Right cardiac atrium (tissue), 5 donors: ENCODE measurements at regions of chr16 and their contacts with region 1.

Region 1: DNA sequence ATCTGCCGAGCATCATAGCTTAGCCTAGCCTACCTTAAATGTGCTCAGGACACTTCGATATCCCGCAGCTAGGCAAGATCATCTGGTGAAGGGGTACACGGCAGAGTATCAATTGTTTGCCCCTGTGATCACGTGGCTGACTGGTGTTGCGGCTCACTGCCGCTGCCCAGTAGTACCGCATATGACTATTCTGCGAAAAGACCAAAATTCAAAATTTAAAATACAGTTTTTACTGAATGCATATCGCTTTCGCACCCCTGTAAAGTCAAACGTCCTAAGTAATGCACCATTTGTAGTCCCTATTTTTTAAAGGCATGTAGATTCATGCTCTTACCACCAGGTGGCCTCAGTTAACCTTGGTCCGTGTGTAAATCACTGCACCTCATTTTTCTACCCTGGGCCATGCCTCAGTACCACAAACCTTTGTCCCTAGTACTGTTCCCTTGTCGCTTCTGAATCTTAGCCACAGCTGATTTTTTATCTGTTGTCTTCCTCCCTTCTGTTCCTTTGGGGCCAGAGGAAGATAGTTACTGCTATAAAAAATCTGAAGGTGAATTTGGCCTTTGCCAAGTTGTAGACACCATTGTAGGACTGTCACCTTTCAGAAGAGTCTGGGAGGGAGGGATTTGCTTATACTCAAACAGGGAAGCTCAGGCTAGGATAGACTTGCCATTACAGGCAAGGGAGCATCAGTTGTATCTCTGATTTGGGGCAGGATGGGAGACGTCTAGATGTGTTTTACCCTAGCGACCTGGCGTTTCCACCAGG is 34.4 kb downstream of the WWP2 start:
- DNase-seq: no peak
- ATAC-seq: peak; percentile 82 to 83
- H3K4me3 ChIP-seq: no peak overlapping the region
- H3K27ac ChIP-seq: no peak overlapping the region
- H3K4me1 ChIP-seq: no peaks in the 10 kb centered on the region
- H3K27me3 ChIP-seq: no peaks in the 10 kb centered on the region

Region 2: GRCh38 chr16:69632836-69633235 is 163.7 kb before region 1 on chr16:
- intact Hi-C with region 1: no loop called
- DNase-seq: no peak
- ATAC-seq: no peak
- H3K4me3 ChIP-seq: no peak overlapping the region
- H3K27ac ChIP-seq: no peak overlapping the region
- H3K4me1 ChIP-seq: no peaks in the 10 kb centered on the region
- H3K27me3 ChIP-seq: no peaks in the 10 kb centered on the region

Region 3: GRCh38 chr16:69712914-69713581 is 83.5 kb before region 1 on chr16:
- intact Hi-C with region 1: no loop called
- DNase-seq: no peak
- ATAC-seq: no peak
- H3K4me3 ChIP-seq: no peak overlapping the region
- H3K27ac ChIP-seq: no peak overlapping the region
- H3K4me1 ChIP-seq: no peaks in the 10 kb centered on the region
- H3K27me3 ChIP-seq: no peaks in the 10 kb centered on the region

Region 4: GRCh38 chr16:69859105-69859989 is 62.8 kb after region 1 on chr16:
- intact Hi-C with region 1: loop called in 2 of 4 experiments (anchors 5 to 10 kb)
- DNase-seq: peak in 1 of 3 donors; percentile 33
- ATAC-seq: peak; percentile 58 to 74
- H3K4me3 ChIP-seq: no peak overlapping the region
- H3K27ac ChIP-seq: peak overlapping the region; percentile 85
- H3K4me1 ChIP-seq: peaks cover 12% of the 10 kb centered on the region
- H3K27me3 ChIP-seq: no peaks in the 10 kb centered on the region

Region 5: DNA sequence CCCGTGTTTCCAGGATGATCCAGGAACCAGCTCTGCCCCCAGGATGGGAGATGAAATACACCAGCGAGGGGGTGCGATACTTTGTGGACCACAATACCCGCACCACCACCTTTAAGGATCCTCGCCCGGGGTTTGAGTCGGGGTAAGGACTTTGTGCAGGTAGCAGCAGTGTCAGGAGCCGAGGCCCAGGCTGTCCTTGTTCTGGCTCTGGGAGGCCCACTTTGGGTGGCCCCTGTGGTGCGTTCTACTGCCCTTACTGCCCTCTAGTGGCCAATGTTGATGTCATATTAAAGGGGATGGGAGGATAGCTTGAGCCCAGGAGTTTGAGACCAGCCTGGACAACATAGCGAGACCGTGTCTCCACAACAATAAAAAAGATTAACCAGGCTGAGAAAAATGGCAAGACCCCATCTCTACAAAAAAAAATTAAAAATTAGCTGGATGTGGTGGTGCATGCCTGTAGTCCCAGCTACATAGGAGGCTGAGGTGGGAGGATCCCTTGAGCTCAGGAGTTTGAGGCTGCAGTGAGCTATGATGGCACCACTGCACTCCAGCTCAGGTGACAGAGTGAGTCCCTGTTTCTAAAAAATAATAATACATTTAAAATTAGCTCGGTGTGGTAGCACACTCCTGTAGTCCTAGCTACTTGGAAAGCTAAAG is 133.7 kb after region 1 on chr16:
- intact Hi-C with region 1: loop called (anchors 2 to 5 kb)
- DNase-seq: peak; percentile 51 to 78 (median 76)
- ATAC-seq: peak; percentile 66 to 76
- H3K4me3 ChIP-seq: no peak overlapping the region
- H3K27ac ChIP-seq: no peak overlapping the region
- H3K4me1 ChIP-seq: peaks cover 6% of the 10 kb centered on the region
- H3K27me3 ChIP-seq: no peaks in the 10 kb centered on the region

Region 6: DNA sequence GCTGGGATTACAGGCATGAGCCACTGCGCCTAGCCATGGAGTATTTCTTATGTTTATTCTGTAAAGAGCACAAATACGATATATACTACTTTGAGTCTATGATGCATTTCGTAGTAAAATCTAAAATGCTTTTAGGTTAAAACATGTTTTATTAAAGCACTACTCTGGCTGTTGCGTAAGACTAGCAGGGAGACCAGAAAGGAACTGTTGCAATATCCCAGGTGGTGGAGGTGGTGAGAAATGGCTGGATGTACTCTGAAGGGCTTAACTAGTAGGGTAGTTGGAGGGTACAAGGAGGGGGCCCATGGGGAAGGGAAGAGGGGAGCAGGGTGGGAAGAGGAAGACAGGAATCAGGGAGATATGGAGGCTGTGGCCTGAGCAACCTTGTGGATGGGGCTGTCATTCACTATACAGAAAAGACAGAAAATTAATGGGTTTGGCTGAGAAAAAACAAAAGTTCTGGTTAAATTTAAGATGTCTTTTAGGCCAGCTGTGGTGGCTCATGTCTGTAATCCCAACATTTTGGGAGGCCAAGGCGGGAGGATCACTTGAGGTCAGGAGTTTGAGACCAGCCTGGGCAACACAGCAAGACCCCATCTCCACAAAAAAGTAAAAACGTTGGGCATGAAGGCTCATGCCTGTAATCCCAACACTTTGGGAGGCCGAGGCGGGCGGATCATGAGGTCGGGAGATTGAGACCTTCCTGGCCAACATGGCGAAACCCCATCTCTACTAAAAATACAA is 606.6 kb after region 1 on chr16:
- intact Hi-C with region 1: no loop called
- DNase-seq: no peak
- ATAC-seq: no peak
- H3K4me3 ChIP-seq: no peak overlapping the region
- H3K27ac ChIP-seq: no peak overlapping the region
- H3K4me1 ChIP-seq: no peaks in the 10 kb centered on the region
- H3K27me3 ChIP-seq: no peaks in the 10 kb centered on the region